ENCODE measurements at regions of chr1 and their contacts with region 1.

Region 1: DNA sequence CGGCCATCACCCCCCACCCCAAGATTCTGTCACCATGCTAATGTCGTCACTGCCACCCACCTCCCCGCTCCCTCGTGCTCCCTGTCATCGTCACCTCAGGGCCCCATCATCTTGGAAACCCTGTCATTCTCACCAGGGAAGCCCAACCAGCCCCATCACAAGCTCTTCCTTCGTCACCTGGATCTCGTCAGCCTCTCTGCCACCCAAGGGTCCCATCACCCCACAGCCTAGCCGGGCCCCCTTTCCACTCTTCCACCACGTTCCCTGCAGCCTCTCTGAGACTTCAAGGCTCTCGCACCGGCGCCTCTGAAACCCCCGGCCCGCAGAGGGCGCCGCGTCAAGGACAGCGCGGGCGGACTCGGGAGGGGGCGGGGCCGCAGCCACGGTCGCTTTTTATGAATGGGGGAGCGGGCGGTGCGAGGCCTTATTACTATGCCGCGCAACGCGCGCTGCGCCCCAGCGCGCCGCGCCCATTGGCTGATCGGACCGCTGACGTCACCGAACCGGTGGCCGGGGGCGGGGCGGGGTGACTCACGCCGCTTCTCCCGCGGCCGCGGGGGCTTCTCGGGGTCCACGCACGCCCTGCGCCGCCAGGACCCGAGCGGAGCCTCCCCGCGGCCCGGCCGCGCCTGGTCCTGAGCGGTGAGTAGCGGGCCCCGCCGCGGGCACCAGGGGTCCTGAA is at the start of gene GPR3:
- DNase-seq: peak; percentile 95 to 98 (median 97)
- ATAC-seq: peak; percentile 91
- H3K4me3 ChIP-seq: peak within 1 kb of the TSS; percentile 39
- H3K27ac ChIP-seq: peak within 1 kb of the TSS; percentile 77
- H3K4me1 ChIP-seq: peaks cover 9% of the 10 kb centered on the region
- H3K27me3 ChIP-seq: no peaks in the 10 kb centered on the region
- total RNA-seq, gene GPR3: 0.46 to 3.3 (median 0.68) TPM

Region 2: GRCh38 chr1:27300341-27301051 is 91.7 kb before region 1 on chr1:
- intact Hi-C with region 1: loop called (anchors 2 to 5 kb)
- DNase-seq: peak; percentile 82 to 94 (median 93)
- ATAC-seq: peak; percentile 86
- H3K4me3 ChIP-seq: no peak overlapping the region
- H3K27ac ChIP-seq: peak overlapping the region; percentile 78
- H3K4me1 ChIP-seq: peaks cover 13% of the 10 kb centered on the region
- H3K27me3 ChIP-seq: no peaks in the 10 kb centered on the region

Region 3: GRCh38 chr1:27357281-27358037 is 34.8 kb before region 1 on chr1:
- intact Hi-C with region 1: loop called in 2 of 4 experiments (anchors 5 kb)
- DNase-seq: peak; percentile 77 to 89 (median 88)
- ATAC-seq: peak; percentile 54 to 65
- H3K4me3 ChIP-seq: no peak overlapping the region
- H3K27ac ChIP-seq: no peak overlapping the region
- H3K4me1 ChIP-seq: no peaks in the 10 kb centered on the region
- H3K27me3 ChIP-seq: no peaks in the 10 kb centered on the region

Region 4: GRCh38 chr1:27445177-27445936 is 53.1 kb after region 1 on chr1:
- intact Hi-C with region 1: no loop called
- DNase-seq: no peak
- ATAC-seq: no peak
- H3K4me3 ChIP-seq: no peak overlapping the region
- H3K27ac ChIP-seq: no peak overlapping the region
- H3K4me1 ChIP-seq: peaks cover 5% of the 10 kb centered on the region
- H3K27me3 ChIP-seq: no peaks in the 10 kb centered on the region

Measured in right cardiac atrium (tissue), 5 donors.